OCI-LY7 (cell line): ENCODE measurements at regions of chr1 and their contacts with region 1.

Region 1: DNA sequence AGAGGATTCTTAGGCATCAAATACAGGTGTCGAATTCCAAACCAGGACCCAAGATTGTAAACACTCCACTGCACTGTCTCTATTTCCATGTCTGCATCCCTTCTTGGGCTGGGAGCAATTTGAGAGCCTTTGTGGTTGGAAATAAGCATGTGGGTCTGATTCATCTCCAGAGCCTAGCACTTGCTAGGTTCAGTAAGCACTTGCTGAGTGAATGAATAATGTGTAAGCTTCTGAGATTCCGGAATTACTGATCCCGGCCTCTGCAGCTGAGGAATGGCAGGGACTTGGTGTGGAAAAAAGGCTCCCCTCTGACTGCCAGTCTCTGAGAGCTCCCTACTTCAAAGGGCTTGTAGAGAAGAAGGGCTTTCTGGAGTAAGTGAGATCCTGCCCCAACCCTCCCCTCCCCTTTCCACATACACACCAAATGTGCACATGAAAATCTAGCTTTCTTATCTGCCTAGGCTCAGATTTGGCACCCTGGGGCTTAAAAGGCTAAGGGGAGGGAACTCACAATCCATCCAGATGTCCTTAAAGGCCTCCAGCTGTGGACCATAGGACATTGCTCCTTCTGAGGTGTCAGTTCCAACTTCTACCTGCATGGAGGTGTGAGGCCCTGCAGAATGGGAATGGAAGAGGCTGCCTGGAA is 39.6 kb upstream of the TRABD2B start:
- DNase-seq: no peak
- H3K4me3 ChIP-seq: no peak overlapping the region
- H3K27ac ChIP-seq: no peak overlapping the region
- H3K4me1 ChIP-seq: no peaks in the 10 kb centered on the region
- CTCF ChIP-seq: no peak

Region 2: DNA sequence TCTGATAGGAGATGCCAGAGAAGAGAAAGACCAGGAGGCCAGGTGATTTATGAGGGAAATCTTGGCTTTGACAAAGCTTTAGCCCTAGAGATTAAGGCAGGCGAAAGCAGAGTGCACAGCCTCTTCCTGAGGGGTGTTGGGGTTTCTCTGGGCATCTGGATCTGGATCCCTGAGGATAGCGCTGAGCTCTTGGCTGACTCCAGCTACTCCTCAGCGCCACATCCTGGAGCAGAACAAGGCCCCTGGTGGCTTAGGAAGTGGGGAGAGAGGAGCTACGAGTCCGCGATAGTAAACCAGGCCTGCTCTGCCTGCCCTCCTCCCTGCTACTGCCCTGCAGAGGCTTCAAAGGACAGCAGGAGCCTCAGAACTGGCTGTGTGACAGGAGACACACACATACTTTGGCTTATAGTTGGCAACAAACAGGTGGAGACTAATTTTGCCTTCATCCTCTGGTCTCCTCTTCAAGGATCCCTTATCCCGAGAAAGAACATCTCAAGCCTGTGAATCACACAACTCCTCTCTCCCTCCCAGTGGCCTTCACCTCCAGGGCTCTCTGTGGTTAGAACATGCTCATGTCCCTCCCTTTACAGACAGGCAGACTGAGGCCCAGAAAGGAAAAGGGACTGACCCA is 106.5 kb before region 1 on chr1:
- CTCF ChIA-PET with region 1: interaction called, 12 read pairs
- POLR2A ChIA-PET with region 1: no interaction called
- intact Hi-C with region 1: no loop called
- DNase-seq: no peak
- H3K4me3 ChIP-seq: no peak overlapping the region
- H3K27ac ChIP-seq: no peak overlapping the region
- H3K4me1 ChIP-seq: no peaks in the 10 kb centered on the region
- CTCF ChIP-seq: no peak